Activated B cell treated with CpG ODN at 0.5 μM for 24 hours (primary cell): ENCODE measurements at regions of chr1 and their contacts with region 1.

Region 1: GRCh38 chr1:114581335-114582287 is at the start of gene BCAS2:
- DNase-seq: peak; percentile 81
- ATAC-seq: peak; percentile 97
- H3K4me3 Mint-ChIP-seq: peak within 1 kb of the TSS; percentile 99
- H3K27ac Mint-ChIP-seq: peak within 1 kb of the TSS; percentile 98
- H3K4me1 Mint-ChIP-seq: peaks cover 29% of the 10 kb centered on the region
- H3K27me3 Mint-ChIP-seq: peaks cover 2% of the 10 kb centered on the region
- CTCF ChIP-seq: no peak
- total RNA-seq, gene BCAS2: 33.1 and 36.3 TPM in 2 replicates

Region 2: DNA sequence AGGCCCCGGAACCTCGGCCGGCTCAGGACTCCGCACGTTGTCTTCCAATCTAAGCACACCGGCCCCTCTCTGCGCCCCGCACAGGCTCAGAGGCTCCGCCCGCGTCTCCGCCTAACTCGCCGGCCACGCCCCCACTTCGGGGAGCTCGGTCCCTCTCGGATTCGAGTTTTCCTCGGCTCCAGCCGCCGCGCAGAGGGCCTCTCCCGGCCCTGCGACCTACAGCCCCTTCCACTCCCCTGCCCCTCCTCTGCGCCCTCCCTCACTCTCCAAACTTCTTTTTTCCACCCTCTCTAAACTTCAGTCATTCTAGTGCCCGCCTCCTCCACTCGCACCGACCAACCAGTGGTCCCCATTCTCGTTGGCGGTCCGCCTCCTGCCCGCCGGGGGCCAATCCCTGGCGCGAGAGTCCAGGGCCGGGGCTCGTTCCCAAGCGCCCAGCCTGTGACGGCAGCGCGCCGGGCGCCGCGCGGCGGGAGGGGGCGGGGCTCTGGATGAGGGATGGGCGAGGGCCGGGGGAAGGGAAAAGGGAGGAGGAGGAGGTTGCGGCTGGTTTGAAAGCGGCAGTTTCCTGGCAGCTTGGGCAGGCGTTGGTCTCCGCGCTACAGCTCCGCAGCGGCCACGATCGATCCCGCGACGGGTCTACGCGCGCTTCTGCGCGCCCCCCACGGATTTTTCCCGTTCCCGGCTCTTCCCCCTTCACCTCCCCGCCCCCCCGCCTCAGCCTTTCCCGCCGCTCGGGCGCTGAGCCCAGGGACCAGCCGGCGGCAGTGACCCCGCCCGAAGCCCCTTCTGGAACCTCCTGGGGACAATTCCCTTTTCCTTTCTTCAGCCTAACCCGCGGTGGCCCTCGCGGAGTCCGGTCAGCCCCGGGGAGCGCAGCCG is 1191.4 kb before region 1 on chr1 and contains the start of gene MAGI3:
- CTCF ChIA-PET with region 1: no interaction called
- POLR2A ChIA-PET with region 1: no interaction called
- intact Hi-C with region 1: loop called (anchors 2 kb)
- DNase-seq: peak; percentile 83
- ATAC-seq: peak; percentile 98
- H3K4me3 Mint-ChIP-seq: peak within 1 kb of the TSS; percentile 95
- H3K27ac Mint-ChIP-seq: peak within 1 kb of the TSS; percentile 77
- H3K4me1 Mint-ChIP-seq: peaks cover 18% of the 10 kb centered on the region
- H3K27me3 Mint-ChIP-seq: peaks cover 29% of the 10 kb centered on the region
- CTCF ChIP-seq: no peak
- total RNA-seq, gene MAGI3: 0.83 and 1.0 TPM in 2 replicates

Region 3: GRCh38 chr1:114346480-114347029 is 235.1 kb before region 1 on chr1:
- CTCF ChIA-PET with region 1: interaction called, 3 read pairs
- POLR2A ChIA-PET with region 1: interaction called, 4 read pairs
- intact Hi-C with region 1: loop called (anchors 1 kb)
- DNase-seq: peak; percentile 95
- ATAC-seq: peak; percentile 100
- H3K4me3 Mint-ChIP-seq: peak overlapping the region; percentile 94
- H3K27ac Mint-ChIP-seq: peak overlapping the region; percentile 56
- H3K4me1 Mint-ChIP-seq: peaks cover 7% of the 10 kb centered on the region
- H3K27me3 Mint-ChIP-seq: peaks cover 7% of the 10 kb centered on the region
- CTCF ChIP-seq: peak; percentile 100

Region 4: DNA sequence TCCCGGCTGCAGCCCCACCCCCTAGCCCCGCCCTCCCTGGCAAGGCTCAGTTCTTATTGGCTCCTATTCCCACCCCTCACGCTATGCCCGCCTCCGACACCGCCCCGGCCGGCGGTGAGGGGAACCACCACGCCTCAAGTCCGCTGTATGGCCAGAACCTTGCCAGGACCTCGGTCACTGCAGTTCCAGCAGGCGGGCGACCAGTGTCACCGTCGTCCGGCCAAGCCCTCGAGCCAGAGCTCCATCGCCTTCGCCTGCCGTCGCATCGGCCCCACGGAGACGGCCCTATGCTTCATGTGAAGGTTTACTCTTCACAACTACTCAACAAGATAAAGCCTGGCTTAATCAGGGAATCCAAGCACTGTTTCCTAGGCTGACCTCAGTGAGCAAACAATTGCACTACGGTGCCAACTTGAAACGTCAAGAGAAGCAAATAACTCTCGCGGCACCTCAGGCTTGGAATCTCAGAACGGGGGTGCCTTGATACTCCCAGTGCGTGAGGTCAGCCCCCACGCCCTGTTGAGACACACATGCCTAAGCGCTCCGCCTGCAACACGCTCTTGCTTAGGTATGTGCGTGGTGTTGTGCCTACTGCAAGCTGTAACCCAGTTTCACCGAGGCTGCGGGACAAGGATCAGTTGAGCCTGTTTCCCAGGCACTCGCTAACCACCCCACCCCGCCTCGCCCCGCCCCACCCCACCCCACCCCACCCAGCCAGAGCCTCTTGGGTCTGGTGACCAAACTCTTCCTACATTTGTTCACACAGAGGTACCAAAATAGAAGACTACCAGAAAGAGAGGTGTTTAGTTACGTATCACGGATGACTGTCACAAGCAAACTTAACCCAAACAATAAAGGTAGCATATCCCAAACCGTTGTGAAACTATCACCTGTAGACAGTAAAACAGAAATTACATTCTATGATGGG is 88.7 kb after region 1 on chr1:
- CTCF ChIA-PET with region 1: no interaction called
- POLR2A ChIA-PET with region 1: no interaction called
- intact Hi-C with region 1: loop called (anchors 1 kb)
- DNase-seq: peak; percentile 80
- ATAC-seq: peak; percentile 99
- H3K4me3 Mint-ChIP-seq: peak overlapping the region; percentile 94
- H3K27ac Mint-ChIP-seq: peak overlapping the region; percentile 67
- H3K4me1 Mint-ChIP-seq: peaks cover 10% of the 10 kb centered on the region
- H3K27me3 Mint-ChIP-seq: peaks cover 30% of the 10 kb centered on the region
- CTCF ChIP-seq: no peak

Region 5: DNA sequence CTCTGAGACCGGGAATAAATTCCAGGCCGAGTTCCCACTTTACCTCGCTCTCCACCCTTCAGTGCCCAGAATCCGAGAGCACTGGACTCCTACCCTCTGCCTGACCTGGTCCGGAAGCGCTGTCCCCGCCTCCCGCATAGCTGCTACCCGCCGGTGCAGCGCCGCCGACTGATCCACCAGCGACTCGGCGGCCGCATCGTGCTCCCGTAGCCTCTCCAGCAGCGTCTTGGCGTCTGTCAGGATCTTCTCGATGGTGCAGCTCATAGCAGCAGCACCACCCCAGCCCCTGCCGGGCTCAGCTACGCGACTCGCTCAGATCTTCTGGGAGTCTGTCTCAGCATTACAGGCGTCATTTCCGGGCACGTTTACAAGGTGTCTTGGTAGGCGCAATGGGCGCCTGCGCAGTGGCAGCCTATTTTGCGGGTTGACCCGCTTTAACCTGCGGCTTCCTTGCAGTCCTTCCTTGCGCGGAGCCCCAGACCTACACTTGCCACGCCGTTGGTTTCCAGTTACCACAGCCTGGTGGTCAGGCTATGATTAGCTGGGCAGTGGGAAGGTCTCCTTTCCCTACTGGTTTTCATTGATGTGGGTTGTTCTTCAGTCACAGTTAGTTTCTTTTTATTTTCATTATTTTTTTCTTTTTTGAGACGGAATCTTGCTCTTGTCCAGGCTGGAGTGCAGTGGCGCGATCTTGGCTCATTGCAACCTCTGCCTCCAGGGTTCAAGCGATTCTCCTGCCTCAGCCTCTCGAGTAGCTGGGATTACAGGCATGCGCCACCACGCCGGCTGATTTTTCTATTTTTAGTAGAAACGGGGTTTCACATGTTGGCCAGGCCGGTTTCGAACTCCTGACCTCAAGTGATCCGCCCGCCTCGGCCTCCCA is 199.0 kb after region 1 on chr1 and contains the start of gene SIKE1:
- CTCF ChIA-PET with region 1: no interaction called
- POLR2A ChIA-PET with region 1: interaction called, 3 read pairs
- intact Hi-C with region 1: loop called (anchors 2 kb)
- DNase-seq: peak; percentile 80
- ATAC-seq: peak; percentile 97
- H3K4me3 Mint-ChIP-seq: peak within 1 kb of the TSS; percentile 100
- H3K27ac Mint-ChIP-seq: peak within 1 kb of the TSS; percentile 97
- H3K4me1 Mint-ChIP-seq: peaks cover 28% of the 10 kb centered on the region
- H3K27me3 Mint-ChIP-seq: peaks cover 7% of the 10 kb centered on the region
- CTCF ChIP-seq: no peak
- total RNA-seq, gene SIKE1: 38.4 and 44.2 TPM in 2 replicates